Activated CD8-positive, alpha-beta T cell treated with anti-CD3 and anti-CD28 coated beads for 36 hours (primary cell): ENCODE measurements at regions of chr6 and their contacts with region 1.

Region 1: GRCh38 chr6:133916650-133917151 is 27.8 kb downstream of the TCF21 start:
- DNase-seq: peak; percentile 93
- ATAC-seq: peak; percentile 76
- H3K4me3 Mint-ChIP-seq: no peak overlapping the region
- H3K27ac Mint-ChIP-seq: no peak overlapping the region
- H3K4me1 Mint-ChIP-seq: peaks cover 4% of the 10 kb centered on the region
- H3K27me3 Mint-ChIP-seq: peaks cover 22% of the 10 kb centered on the region
- CTCF ChIP-seq: peak; percentile 92

Region 2: GRCh38 chr6:132962936-132963868 is 953.5 kb before region 1 on chr6:
- CTCF ChIA-PET with region 1: interaction called, 10 read pairs
- POLR2A ChIA-PET with region 1: no interaction called
- intact Hi-C with region 1: no loop called
- DNase-seq: peak; percentile 79
- ATAC-seq: peak; percentile 71
- H3K4me3 Mint-ChIP-seq: no peak overlapping the region
- H3K27ac Mint-ChIP-seq: no peak overlapping the region
- H3K4me1 Mint-ChIP-seq: no peaks in the 10 kb centered on the region
- H3K27me3 Mint-ChIP-seq: peaks cover 17% of the 10 kb centered on the region
- CTCF ChIP-seq: peak; percentile 78

Region 3: GRCh38 chr6:133568970-133569889 is 347.5 kb before region 1 on chr6:
- CTCF ChIA-PET with region 1: interaction called, 31 read pairs
- POLR2A ChIA-PET with region 1: no interaction called
- intact Hi-C with region 1: loop called (anchors 5 kb)
- DNase-seq: peak; percentile 38
- ATAC-seq: peak; percentile 70
- H3K4me3 Mint-ChIP-seq: no peak overlapping the region
- H3K27ac Mint-ChIP-seq: no peak overlapping the region
- H3K4me1 Mint-ChIP-seq: peaks cover 5% of the 10 kb centered on the region
- H3K27me3 Mint-ChIP-seq: peaks cover 26% of the 10 kb centered on the region
- CTCF ChIP-seq: peak; percentile 54

Region 4: GRCh38 chr6:133787859-133788505 is 128.7 kb before region 1 on chr6:
- CTCF ChIA-PET with region 1: no interaction called
- POLR2A ChIA-PET with region 1: no interaction called
- intact Hi-C with region 1: no loop called
- DNase-seq: no peak
- ATAC-seq: no peak
- H3K4me3 Mint-ChIP-seq: no peak overlapping the region
- H3K27ac Mint-ChIP-seq: no peak overlapping the region
- H3K4me1 Mint-ChIP-seq: no peaks in the 10 kb centered on the region
- H3K27me3 Mint-ChIP-seq: peaks cover 9% of the 10 kb centered on the region
- CTCF ChIP-seq: no peak

Region 5: GRCh38 chr6:133837801-133838349 is 78.8 kb before region 1 on chr6:
- CTCF ChIA-PET with region 1: interaction called, 59 read pairs
- POLR2A ChIA-PET with region 1: no interaction called
- intact Hi-C with region 1: loop called (anchors 2 kb)
- DNase-seq: peak; percentile 71
- ATAC-seq: peak; percentile 83
- H3K4me3 Mint-ChIP-seq: peak overlapping the region; percentile 61
- H3K27ac Mint-ChIP-seq: no peak overlapping the region
- H3K4me1 Mint-ChIP-seq: peaks cover 6% of the 10 kb centered on the region
- H3K27me3 Mint-ChIP-seq: peaks cover 24% of the 10 kb centered on the region
- CTCF ChIP-seq: peak; percentile 88

Region 6: DNA sequence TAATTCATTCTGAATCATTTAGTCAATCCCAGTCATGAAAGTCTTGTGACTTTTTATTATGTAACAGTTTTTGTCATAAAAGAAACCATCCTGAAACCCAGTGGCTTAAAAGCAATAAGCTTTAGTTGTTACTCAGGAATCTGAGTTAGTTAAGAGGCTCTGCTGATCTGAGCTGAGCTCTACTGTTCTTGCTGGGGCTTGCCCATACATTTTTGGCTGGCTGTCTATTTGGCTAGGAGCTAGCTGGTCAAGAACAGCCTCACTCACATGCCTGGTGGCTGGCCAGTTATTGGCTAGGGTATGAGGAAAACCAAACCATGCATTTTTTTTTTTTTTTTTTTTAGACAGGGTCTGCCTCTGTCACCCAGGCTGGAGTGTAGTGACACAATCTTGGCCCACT is 17.1 kb before region 1 on chr6:
- CTCF ChIA-PET with region 1: interaction called, 13 read pairs
- POLR2A ChIA-PET with region 1: no interaction called
- intact Hi-C with region 1: no loop called
- DNase-seq: no peak
- ATAC-seq: no peak
- H3K4me3 Mint-ChIP-seq: no peak overlapping the region
- H3K27ac Mint-ChIP-seq: no peak overlapping the region
- H3K4me1 Mint-ChIP-seq: no peaks in the 10 kb centered on the region
- H3K27me3 Mint-ChIP-seq: peaks cover 46% of the 10 kb centered on the region
- CTCF ChIP-seq: no peak

Region 7: DNA sequence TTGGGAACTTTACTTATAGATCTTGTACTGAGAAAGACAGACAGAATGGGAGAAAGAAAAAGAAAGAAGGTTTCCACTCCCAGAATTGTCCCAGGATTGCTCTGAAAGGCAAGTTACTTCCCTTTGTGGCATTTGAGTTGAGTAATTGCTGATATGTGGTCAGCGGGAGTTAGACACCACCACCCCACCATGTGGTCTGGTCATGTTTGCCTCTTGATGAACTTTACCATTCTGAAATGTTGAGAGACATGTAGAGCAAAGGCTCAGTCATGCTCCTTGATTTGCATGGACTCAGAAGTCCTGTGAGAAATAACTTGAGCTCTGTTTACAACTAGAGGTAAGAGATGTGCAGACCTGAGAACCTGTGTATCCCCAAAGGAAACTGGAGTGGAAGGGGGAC is 10.7 kb before region 1 on chr6:
- CTCF ChIA-PET with region 1: interaction called, 22 read pairs
- POLR2A ChIA-PET with region 1: no interaction called
- intact Hi-C with region 1: no loop called
- DNase-seq: no peak
- ATAC-seq: no peak
- H3K4me3 Mint-ChIP-seq: no peak overlapping the region
- H3K27ac Mint-ChIP-seq: no peak overlapping the region
- H3K4me1 Mint-ChIP-seq: no peaks in the 10 kb centered on the region
- H3K27me3 Mint-ChIP-seq: peaks cover 47% of the 10 kb centered on the region
- CTCF ChIP-seq: no peak

Region 8: GRCh38 chr6:134145786-134146185 is 229.1 kb after region 1 on chr6:
- CTCF ChIA-PET with region 1: no interaction called
- POLR2A ChIA-PET with region 1: no interaction called
- intact Hi-C with region 1: no loop called
- DNase-seq: no peak
- ATAC-seq: no peak
- H3K4me3 Mint-ChIP-seq: no peak overlapping the region
- H3K27ac Mint-ChIP-seq: no peak overlapping the region
- H3K4me1 Mint-ChIP-seq: no peaks in the 10 kb centered on the region
- H3K27me3 Mint-ChIP-seq: no peaks in the 10 kb centered on the region
- CTCF ChIP-seq: no peak